GM12878 (cell line): ENCODE measurements at regions of chr6 and their contacts with region 1.

Region 1: DNA sequence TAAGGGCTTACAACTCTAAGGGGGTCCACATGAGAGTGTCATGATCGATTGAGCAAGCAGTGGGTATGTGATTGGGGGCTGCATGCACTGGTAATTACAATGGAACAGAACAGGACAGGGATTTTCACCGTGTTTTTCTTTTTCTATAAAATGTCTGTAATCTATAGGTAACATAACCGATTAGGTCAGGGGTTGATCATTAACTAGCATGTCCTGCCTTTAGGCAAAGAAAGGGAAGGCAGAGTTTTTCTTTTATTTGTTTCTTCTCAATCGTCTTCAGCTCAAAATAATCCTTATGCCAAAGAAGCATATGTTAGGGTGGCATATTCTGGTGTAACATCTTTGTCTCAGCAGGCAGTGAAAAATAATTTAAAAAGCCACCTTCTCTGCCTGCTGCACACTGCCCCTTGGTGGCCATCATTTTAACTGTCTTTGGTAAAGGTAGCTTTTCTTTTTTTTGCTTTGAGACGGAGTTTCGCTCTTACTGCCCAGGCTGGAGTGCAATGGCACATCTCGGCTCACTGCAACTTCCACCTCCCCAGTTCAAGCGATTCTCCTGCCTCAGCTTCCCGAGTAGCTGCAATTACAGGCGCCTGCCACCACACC is 9.7 kb upstream of the CEP43 start:
- DNase-seq: no peak
- ATAC-seq: peak; percentile 87
- H3K4me3 ChIP-seq: no peak overlapping the region
- H3K27ac ChIP-seq: no peak overlapping the region
- H3K4me1 ChIP-seq: no peaks in the 10 kb centered on the region; the same call in 1 of the 2 replicates
- H3K27me3 ChIP-seq: no peaks in the 10 kb centered on the region
- CTCF ChIP-seq: peak; percentile 42 to 54 (median 44); a peak in 5 of 6 replicates
- EP300 ChIP-seq: no peak
- POLR2A ChIP-seq: no peak
- RAD21 ChIP-seq: peak; percentile 77

Region 2: GRCh38 chr6:166786704-166787293 is 202.7 kb before region 1 on chr6:
- CTCF ChIA-PET with region 1: interaction called, 69 read pairs
- POLR2A ChIA-PET with region 1: no interaction called
- RAD21 ChIA-PET with region 1: interaction called, 57 read pairs
- SMC1A ChIA-PET with region 1: interaction called, 35 read pairs
- in situ Hi-C with region 1: no loop called
- intact Hi-C with region 1: loop called (anchors 1 kb)
- DNase-seq: peak; percentile 21
- ATAC-seq: peak; percentile 83
- H3K4me3 ChIP-seq: no peak overlapping the region
- H3K27ac ChIP-seq: no peak overlapping the region
- H3K4me1 ChIP-seq: no peaks in the 10 kb centered on the region
- H3K27me3 ChIP-seq: no peaks in the 10 kb centered on the region
- CTCF ChIP-seq: peak; percentile 61 to 74 (median 64)
- EP300 ChIP-seq: no peak
- POLR2A ChIP-seq: no peak
- RAD21 ChIP-seq: peak; percentile 93

Region 3: GRCh38 chr6:166935353-166935752 is 54.2 kb before region 1 on chr6:
- CTCF ChIA-PET with region 1: interaction called, 15 read pairs
- POLR2A ChIA-PET with region 1: no interaction called
- RAD21 ChIA-PET with region 1: interaction called, 4 read pairs
- SMC1A ChIA-PET with region 1: interaction called, 11 read pairs
- in situ Hi-C with region 1: no loop called
- intact Hi-C with region 1: no loop called
- DNase-seq: no peak
- ATAC-seq: no peak
- H3K4me3 ChIP-seq: no peak overlapping the region
- H3K27ac ChIP-seq: no peak overlapping the region
- H3K4me1 ChIP-seq: no peaks in the 10 kb centered on the region
- H3K27me3 ChIP-seq: no peaks in the 10 kb centered on the region
- CTCF ChIP-seq: no peak
- EP300 ChIP-seq: no peak
- POLR2A ChIP-seq: no peak
- RAD21 ChIP-seq: no peak

Region 4: GRCh38 chr6:166956444-166957086 is 33.0 kb before region 1 on chr6 and contains the start of gene RNASET2:
- CTCF ChIA-PET with region 1: interaction called, 139 read pairs
- POLR2A ChIA-PET with region 1: interaction called, 8 read pairs
- RAD21 ChIA-PET with region 1: interaction called, 79 read pairs
- SMC1A ChIA-PET with region 1: interaction called, 85 read pairs
- in situ Hi-C with region 1: no loop called
- intact Hi-C with region 1: loop called (anchors 2 kb)
- DNase-seq: no peak
- ATAC-seq: peak; percentile 83
- H3K4me3 ChIP-seq: peak within 1 kb of the TSS; percentile 94
- H3K27ac ChIP-seq: peak within 1 kb of the TSS; percentile 94
- H3K4me1 ChIP-seq: peaks cover 49% of the 10 kb centered on the region
- H3K27me3 ChIP-seq: no peaks in the 10 kb centered on the region
- CTCF ChIP-seq: no peak
- EP300 ChIP-seq: no peak
- POLR2A ChIP-seq: peak; percentile 91
- RAD21 ChIP-seq: no peak
- polyA plus RNA-seq, gene RNASET2: 5.5 to 17.8 TPM

Region 5: GRCh38 chr6:167093922-167094432 is 104.4 kb after region 1 on chr6:
- CTCF ChIA-PET with region 1: interaction called, 16 read pairs
- POLR2A ChIA-PET with region 1: no interaction called
- RAD21 ChIA-PET with region 1: interaction called, 10 read pairs
- SMC1A ChIA-PET with region 1: interaction called, 7 read pairs
- in situ Hi-C with region 1: no loop called
- intact Hi-C with region 1: no loop called
- DNase-seq: peak; percentile 90
- ATAC-seq: peak; percentile 66
- H3K4me3 ChIP-seq: peak overlapping the region; percentile 70
- H3K27ac ChIP-seq: peak overlapping the region; percentile 99
- H3K4me1 ChIP-seq: peaks cover 74% of the 10 kb centered on the region
- H3K27me3 ChIP-seq: no peaks in the 10 kb centered on the region
- CTCF ChIP-seq: no peak
- EP300 ChIP-seq: peak; percentile 39 to 66; a peak in 2 of 4 replicates
- POLR2A ChIP-seq: peak; percentile 88
- RAD21 ChIP-seq: no peak

Region 6: DNA sequence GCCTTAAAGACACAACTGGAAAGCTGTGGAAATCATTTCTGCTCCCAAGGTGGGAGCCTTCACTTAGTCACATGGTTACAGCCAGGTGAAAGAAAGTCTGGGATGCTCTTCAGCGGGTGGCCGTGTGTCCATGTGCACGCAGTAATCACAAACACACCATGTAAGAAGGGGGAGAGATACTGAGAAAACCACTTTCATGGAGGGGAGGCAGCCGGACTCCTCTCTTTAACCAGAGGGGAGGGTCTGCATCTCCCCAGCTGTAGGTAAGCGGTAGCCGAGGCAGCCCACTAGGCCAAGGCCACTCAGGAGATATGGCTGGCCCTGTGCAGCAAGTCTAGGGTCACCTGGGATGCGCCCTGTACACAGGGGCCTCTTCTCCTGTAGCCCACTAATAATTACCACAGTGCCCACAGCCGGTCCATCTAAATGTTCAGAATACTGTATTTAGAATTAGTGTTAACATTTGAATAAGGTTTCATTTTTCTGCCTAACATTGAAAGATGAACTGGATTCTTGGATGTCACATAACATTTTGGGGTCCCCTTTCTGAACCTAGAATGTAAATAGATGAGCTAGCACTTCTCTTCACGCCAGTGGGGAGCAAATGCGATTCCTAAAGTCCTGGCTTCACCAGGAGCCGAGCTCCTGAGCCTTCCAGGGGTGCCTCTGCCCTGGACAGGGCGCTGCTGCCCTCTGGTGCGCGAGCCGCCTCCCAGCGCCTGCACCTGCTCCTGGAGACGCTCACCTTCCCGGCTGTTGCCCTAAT is 152.3 kb after region 1 on chr6:
- CTCF ChIA-PET with region 1: interaction called, 87 read pairs
- POLR2A ChIA-PET with region 1: no interaction called
- RAD21 ChIA-PET with region 1: interaction called, 40 read pairs
- SMC1A ChIA-PET with region 1: interaction called, 54 read pairs
- in situ Hi-C with region 1: no loop called
- intact Hi-C with region 1: no loop called
- DNase-seq: no peak
- ATAC-seq: peak; percentile 96
- H3K4me3 ChIP-seq: no peak overlapping the region
- H3K27ac ChIP-seq: no peak overlapping the region
- H3K4me1 ChIP-seq: peaks cover 10% of the 10 kb centered on the region
- H3K27me3 ChIP-seq: no peaks in the 10 kb centered on the region
- CTCF ChIP-seq: peak; percentile 94 to 98 (median 96); a peak in 5 of 6 replicates
- EP300 ChIP-seq: no peak
- POLR2A ChIP-seq: no peak
- RAD21 ChIP-seq: peak; percentile 99

Region 7: DNA sequence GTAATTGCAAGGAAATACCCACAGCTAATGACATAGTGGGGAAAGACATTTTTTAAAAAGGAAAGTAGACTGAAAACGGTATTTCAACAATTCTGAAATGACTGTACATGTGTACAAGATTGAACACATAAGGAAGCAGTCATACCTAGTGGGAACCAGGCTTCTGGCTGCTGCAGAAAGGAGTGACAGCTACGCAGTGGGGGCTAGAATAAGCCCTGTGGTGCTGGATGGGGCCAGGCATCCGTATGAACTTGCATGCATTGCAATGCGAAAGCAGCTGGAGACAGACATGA is 223.1 kb after region 1 on chr6:
- CTCF ChIA-PET with region 1: no interaction called
- POLR2A ChIA-PET with region 1: no interaction called
- RAD21 ChIA-PET with region 1: no interaction called
- SMC1A ChIA-PET with region 1: no interaction called
- in situ Hi-C with region 1: no loop called
- intact Hi-C with region 1: no loop called
- DNase-seq: no peak
- ATAC-seq: peak; percentile 83
- H3K4me3 ChIP-seq: no peak overlapping the region
- H3K27ac ChIP-seq: no peak overlapping the region
- H3K4me1 ChIP-seq: peaks cover 5% of the 10 kb centered on the region; the same call in 1 of the 2 replicates
- H3K27me3 ChIP-seq: peaks cover 0 to 1% of the 10 kb centered on the region in 2 experiments; a peak in 2 of 4 replicates
- CTCF ChIP-seq: no peak
- EP300 ChIP-seq: no peak
- POLR2A ChIP-seq: no peak
- RAD21 ChIP-seq: no peak